GM13976 (cell line): ENCODE measurements at regions of chrX and their contacts with region 1.

Region 1: DNA sequence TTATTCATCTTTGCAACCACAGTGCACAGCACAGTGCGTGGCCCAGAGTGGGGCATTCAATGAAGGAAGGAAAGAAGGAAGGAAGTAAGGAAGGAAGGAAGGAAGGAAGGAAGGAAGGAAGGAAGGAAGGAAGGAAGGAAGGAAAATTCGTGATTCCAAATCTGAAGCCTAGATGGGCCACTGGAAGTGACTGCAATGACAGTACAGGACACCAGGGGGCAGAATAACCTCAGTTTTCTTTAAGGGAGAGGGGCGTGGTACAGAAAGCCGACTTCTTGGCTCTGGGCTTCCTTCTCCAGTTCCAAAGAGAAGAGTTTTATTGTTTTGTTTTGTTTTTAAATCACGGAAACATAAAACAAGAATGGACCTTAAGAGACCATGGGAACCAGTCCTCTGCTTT is 47.8 kb downstream of the APLN start:
- DNase-seq: peak; percentile 72
- CTCF ChIP-seq: peak; percentile 83

Region 2: DNA sequence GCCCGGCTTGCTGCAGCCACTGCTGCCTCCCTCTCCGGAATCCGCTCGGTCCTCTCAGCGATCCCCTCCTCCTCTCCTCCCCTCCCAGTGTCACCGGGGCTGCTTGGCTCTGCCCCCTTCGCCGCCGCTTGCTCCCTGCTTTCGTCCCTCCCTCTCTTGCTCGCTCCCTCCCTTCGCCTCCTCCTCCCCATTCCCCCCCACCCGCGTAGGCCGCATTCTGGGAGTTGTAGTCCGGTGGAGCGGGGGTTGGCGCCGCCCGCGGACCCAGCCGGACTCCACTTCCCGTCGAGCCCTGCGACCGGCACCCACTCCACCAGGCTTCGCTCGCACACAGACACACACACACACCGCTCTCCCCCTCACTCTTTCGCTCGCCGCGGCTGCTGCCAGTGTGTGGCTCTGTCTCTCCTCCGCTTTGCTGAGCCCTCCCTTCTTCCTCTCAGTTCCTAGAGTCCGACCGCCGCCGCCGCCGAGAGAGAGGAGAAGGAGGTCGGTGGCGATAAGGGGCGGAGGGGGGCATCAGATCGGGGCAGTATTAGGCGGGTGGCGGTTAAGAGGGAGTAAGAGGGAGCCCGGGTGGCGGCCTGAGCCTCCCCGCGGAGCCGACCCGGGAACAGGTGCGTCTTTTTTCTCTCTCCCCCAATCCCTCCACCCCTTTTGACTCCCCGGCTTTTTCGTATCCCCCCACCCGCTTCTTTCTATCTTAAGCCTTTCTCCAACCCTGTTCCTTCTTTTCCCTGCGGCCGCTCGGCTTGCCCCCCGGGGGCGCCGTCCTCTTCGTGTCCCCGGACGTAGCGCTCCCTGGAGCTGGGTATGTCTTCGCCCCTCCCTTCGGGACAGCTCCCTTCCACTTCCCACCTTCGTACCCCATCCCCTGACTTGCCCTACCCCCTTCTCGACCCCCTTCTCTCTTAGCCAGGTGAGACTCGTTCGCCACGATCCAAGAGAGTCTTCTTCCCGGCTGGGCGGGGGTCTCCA is 375.6 kb after region 1 on chrX and contains the start of gene BCORL1:
- in situ Hi-C with region 1: no loop called
- DNase-seq: peak; percentile 93
- CTCF ChIP-seq: no peak

Region 3: DNA sequence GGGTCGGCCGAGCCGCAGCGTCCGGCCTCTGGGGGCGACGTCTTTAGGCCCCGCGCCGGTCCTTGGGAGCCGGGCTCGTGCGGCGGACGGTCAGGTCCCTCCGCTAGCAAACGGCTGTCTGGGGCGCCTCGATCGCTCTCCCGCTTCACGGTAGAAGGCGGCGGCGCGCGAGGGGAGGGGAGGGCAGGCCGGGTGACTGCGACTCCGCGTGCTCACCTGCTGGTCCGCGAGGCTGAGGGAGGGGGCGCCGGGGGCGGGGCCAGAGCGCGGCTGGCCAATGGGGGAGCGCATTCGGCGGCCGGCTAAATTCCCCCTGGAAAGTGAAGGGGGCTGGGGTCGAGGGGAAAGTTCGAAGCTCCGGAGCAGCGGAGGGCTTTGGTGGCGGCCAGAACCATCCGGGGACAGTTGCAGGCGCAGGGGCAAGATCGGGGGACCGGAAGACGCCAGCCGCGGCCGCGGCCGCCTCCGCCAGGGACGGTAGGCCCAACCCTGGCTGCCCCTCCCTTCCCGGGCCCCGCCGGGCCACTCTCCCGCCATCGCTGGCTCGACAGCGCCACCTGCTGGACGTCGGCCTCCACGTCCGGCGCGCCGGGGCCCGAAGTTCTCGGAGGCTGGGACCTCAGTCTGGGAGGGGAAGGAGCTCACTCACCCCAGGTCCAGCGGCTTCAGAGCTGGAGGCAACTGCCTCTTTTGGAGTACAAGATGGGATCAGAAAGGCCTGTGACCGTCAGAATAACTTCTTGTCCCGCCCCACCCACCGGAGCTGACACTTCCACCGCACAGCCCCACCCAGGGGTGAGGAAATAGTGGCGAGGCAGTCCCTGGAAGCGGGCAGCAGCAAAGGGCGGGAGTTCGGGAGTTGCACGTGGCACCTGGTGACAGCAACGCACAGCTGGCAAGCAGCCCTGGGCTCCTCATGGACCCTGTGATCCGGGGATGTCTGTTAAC is 453.5 kb after region 1 on chrX:
- in situ Hi-C with region 1: loop called (anchors 25 kb)
- DNase-seq: peak; percentile 93
- CTCF ChIP-seq: peak; percentile 96

Region 4: DNA sequence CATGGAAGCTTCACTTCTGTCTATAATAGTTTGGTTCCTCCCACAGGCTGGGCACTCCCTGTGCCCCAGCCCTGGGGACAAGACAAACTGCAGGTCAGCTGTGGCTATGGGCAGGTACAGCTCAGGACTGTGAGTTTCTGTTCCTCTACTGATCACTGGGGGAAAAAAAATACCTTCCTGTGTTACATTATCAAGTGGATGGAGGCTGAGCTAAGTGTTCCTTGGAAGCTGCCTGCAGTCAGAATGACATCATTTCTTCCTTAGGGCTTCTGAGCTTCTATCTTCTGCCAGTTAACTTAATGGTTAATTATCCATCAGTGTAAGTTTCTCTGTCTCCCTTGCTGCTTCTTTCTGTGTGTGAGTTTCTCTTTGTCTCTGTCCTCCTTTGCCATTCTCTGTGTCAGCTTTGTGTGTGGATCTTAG is 569.4 kb after region 1 on chrX:
- in situ Hi-C with region 1: loop called (anchors 25 kb)
- DNase-seq: peak; percentile 48
- CTCF ChIP-seq: no peak